ENCODE measurements at regions of chr17 and their contacts with region 1.

Region 1: DNA sequence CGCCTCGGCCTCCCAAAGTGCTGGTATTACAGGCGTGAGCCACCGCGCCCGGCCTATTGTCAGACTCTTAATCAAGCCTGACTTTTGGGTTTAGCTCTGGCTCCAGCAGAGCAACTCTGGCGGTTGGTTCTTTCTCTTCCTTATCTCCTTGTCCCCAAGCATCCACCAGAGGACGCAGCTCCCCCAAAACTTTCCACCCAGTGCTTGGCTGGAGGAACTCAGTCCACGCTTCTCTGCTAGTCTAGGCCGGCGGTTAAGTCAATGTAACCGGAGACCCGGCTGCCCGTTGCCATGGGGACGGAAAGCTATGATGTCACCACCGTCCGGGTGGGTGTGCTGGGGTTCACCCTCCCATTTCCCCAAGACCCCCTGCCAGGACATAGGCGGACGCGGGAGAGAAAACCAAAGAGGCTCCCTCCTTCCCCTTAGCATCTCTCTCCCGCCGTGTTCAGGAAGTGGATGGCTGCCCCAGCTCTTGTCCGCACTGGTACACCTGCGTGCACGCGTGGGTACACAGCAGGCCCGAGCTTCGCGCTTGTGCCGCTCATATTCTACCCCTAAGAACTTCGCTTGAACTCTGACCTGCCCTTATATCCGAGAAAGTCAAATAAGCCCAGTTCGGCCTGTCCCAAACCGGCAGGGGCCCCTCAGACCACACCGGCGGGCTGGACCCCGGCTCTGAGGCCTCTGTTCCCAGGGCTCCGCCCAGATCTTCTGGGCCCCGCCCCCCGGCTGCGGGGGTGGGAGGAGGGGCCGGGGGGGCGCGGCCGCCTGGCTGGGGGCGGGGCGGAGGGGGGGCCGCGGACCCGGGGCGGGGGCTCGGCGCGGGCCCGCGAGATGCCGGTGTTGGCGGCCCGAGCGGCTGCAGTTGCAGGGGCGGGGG is at the start of gene RND2:
- DNase-seq: peak; percentile 94
- ATAC-seq: peak; percentile 65
- H3K4me3 Mint-ChIP-seq: peak within 1 kb of the TSS; percentile 85
- H3K27ac Mint-ChIP-seq: peak within 1 kb of the TSS; percentile 94
- H3K4me1 Mint-ChIP-seq: peaks cover 48% of the 10 kb centered on the region
- H3K27me3 Mint-ChIP-seq: peaks cover 3% of the 10 kb centered on the region; the same call in 1 of the 2 replicates
- CTCF ChIP-seq: no peak
- total RNA-seq, gene RND2: 46.9 to 51.8 TPM (median 50.2 TPM) in 3 replicates

Region 2: DNA sequence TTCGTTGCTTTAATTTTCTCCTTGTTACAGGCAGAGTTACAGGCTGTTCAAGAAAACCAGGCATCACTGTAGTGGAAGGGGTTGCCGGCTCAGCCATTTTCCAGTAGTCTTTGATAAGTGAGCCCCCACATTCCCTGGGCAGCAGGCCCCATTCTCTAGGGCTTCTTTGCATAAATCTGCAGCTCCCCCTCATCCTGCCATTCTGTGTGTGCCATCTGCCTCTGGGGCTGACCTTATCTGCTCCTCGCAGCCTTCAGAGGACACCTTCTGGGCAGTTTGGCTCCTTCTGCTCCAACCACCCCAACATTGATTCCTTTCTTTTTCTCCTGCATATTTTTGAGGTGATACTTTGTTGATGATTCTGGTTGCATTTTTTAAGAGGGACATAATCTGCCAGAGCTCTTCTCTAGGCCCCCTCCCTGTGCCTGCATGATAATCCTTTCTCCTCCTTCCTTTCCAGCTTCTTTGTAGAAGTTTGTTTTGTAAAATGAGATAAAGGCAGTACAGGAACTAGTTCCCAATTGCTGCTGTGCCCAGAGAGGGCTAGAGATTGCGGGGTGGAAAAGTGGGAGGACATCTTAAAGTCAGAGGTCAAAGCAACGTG is 17.5 kb after region 1 on chr17:
- CTCF ChIA-PET with region 1: interaction called, 45 read pairs
- POLR2A ChIA-PET with region 1: interaction called, 4 read pairs
- DNase-seq: no peak
- ATAC-seq: peak; percentile 52
- H3K4me3 Mint-ChIP-seq: peak overlapping the region; percentile 2; the same call in 1 of the 2 replicates
- H3K27ac Mint-ChIP-seq: peak overlapping the region; percentile 98
- H3K4me1 Mint-ChIP-seq: peaks cover 54% of the 10 kb centered on the region
- H3K27me3 Mint-ChIP-seq: no peaks in the 10 kb centered on the region
- CTCF ChIP-seq: no peak

Region 3: DNA sequence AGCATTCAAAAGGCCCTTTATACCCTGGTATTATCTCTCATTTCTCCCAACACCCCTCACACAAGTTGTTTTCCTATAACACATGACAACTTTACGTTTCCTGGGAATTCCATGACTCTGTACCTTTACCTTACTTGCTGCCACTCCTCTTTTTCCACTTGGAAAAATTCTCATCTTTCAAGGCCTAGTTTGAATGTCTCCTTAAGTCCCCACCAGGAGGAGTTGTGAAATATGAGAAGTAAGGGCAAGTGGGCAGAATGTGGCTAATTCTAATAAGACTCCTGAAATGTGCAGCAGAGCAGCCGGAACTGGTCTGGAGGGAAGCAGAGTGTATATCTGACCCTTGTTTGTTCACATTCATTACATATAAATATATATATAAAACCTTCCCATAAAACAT is 60.8 kb after region 1 on chr17:
- CTCF ChIA-PET with region 1: interaction called, 16 read pairs
- POLR2A ChIA-PET with region 1: no interaction called
- DNase-seq: no peak
- ATAC-seq: no peak
- H3K4me3 Mint-ChIP-seq: no peak overlapping the region
- H3K27ac Mint-ChIP-seq: no peak overlapping the region
- H3K4me1 Mint-ChIP-seq: peaks cover 3% of the 10 kb centered on the region; the same call in 1 of the 2 replicates
- H3K27me3 Mint-ChIP-seq: no peaks in the 10 kb centered on the region
- CTCF ChIP-seq: no peak

Region 4: DNA sequence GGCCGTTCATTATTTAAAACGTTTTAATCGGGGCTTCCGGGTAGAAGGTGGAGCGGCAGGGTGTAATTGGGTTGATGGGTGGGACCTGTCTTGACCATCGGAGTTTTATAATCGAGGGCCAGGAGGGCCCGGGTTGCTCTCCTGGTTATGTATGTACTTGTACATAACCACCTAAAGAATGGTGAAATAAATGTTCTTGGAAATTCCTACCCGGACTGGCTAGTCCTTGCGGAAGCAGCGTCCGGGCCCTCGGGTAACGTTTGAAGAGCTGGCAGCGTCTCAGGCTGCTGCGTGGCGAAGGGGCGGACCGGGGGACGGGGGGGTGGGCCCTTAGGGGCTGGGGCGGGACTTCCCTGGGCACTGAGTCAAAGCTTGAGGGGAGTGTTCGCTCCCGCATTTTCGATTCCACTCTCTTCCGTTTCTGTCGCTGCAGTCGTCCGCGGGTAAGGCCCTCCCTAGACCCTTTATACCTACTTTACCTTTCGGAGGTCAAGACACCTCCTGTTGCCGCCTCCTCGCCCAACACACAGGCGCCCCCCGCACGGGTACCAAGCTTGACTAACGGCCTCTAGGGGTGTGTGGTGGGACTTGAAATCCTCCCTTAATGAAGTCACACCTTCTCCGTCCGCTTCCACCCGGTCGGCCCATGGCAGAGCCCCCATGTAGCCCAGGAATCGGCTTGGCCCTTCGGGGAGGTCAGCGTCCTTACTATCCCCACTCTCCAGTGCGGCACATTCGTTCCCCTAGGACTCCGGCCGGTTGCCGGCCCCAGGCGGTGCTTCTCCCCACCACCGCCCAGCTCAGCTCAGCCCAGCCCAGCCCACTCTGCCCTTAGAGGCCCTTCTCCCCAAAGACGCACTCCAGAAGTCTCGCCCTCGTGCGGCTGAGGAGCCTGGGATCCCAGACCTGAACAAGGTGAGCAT is 187.1 kb after region 1 on chr17 and contains the start of gene TMEM106A:
- CTCF ChIA-PET with region 1: interaction called, 13 read pairs
- POLR2A ChIA-PET with region 1: no interaction called
- DNase-seq: peak; percentile 75
- ATAC-seq: peak; percentile 85
- H3K4me3 Mint-ChIP-seq: peak within 1 kb of the TSS; percentile 94
- H3K27ac Mint-ChIP-seq: peak within 1 kb of the TSS; percentile 96
- H3K4me1 Mint-ChIP-seq: peaks cover 20% of the 10 kb centered on the region
- H3K27me3 Mint-ChIP-seq: no peaks in the 10 kb centered on the region
- CTCF ChIP-seq: no peak
- total RNA-seq, gene TMEM106A: 3.8 to 4.4 TPM (median 4.2 TPM) in 3 replicates

Region 5: GRCh38 chr17:43316522-43317142 is 292.0 kb after region 1 on chr17:
- CTCF ChIA-PET with region 1: interaction called, 10 read pairs
- POLR2A ChIA-PET with region 1: interaction called, 14 read pairs
- DNase-seq: peak; percentile 30
- ATAC-seq: no peak
- H3K4me3 Mint-ChIP-seq: 0 out of 2 replicates have a peak overlapping the region, but pooled peaks have one; percentile 8
- H3K27ac Mint-ChIP-seq: 0 out of 2 replicates have a peak overlapping the region, but pooled peaks have one; percentile 41
- H3K4me1 Mint-ChIP-seq: peaks cover 3% of the 10 kb centered on the region
- H3K27me3 Mint-ChIP-seq: peaks cover 10% of the 10 kb centered on the region
- CTCF ChIP-seq: no peak

Measured in WTC11 (cell line).